H1 (cell line): ENCODE measurements at regions of chr16 and their contacts with region 1.

Region 1: DNA sequence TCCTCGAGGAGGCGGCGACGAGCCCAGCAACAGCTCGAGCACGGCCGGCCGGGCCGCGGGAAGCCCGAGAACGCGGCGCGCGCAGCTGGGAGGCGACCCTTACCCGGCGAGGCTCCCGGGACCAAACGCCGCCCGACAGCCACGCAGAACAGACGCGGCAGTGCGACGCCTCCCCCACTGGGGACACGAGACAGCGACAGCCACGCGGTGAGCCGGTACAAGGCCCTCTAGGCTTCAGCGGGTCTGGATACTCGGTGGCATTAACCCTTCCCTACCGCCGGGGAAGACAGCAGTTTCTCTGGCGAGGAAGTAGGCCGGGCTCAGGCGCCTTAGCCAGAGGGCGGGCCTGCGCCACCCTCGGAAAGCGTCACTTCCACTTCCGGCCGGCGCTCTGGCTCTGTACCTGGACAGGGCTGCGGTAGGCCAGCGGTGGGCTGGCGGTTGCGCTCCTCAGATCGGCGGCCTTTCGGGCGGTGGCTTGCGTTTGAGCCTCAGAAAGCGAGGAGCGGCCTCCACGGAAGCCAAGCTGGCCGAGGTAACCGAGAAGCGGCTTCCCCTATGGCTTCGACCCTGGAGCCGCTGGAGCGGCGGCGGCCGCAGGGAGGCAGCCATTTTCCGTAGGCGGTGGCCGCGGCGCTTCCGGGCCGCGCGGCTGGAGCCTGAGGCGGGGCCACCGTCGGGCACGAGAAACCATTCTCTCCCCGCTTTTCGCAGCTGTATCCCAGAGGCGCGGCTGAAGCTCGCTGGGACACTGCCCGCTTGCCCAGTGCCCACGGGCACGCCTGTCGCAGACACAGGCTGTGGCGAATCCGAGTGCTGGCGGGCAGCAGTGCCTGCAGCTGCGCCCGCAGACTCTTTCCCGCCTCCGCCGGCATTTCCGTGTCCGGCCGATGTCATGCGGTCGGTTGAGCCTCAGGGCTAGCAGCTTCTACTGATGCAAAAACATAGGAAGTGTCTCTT is at the starts of genes TIGD7 and ZNF75A:
- DNase-seq: peak; percentile 66 to 89
- H3K4me3 ChIP-seq: peak within 1 kb of the TSS; percentile 64 to 83 (median 72)
- H3K27ac ChIP-seq: peak within 1 kb of the TSS; percentile 83
- H3K4me1 ChIP-seq: peaks cover 2 to 5% (median 3%) of the 10 kb centered on the region in 4 experiments; a peak in 5 of 7 replicates
- H3K27me3 ChIP-seq: no peaks in the 10 kb centered on the region; a peak in 2 of 7 replicates
- CTCF ChIP-seq: no peak
- EP300 ChIP-seq: 0 out of 3 replicates have a peak, but pooled peaks of 1 of the 2 experiments have one; percentile 3
- POLR2A ChIP-seq: peak; percentile 95 to 97
- RAD21 ChIP-seq: no peak
- total RNA-seq, gene TIGD7: 7.0 and 8.9 TPM in 2 replicates
- total RNA-seq, gene ZNF75A: 27.3 and 30.0 TPM in 2 replicates

Region 2: DNA sequence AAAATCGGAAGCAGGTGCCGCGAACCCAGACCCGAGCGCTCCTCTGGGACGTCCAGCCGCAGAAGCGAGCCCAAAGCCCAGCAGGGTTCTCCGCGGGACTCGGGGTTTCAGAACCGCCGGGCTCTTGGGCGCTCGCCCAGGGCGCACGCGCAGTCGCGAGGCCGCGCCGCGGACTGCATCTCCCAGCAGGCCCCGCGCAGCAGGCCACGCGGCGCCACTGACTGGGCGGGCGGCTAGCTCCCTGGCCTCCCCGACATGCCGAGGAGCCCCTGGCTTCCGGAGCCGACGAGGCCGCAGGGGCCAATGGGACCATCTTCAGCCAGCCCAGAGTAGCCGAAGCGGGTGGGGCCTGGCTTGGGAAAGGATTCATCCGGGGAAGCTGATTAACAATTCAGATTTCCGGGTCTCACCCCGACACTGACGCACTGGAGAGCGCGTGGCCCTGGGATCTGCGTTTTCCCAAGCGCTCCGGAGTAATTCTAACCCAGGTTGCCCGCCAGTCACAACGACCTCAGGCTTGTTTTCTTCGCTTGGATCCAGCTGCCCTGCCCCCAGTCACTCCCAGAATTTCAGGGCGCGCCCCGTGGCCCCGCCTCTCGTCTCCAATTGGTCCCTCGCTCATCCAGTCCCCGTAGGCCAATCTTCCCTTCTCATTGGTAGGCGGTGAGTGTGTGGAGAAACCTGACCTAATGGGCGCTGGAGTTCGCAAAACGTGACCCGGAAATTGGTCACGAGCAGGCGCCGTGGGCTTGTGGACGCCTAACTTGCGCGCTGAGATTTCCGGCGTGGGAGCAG is 22.5 kb before region 1 on chr16 and contains the start of gene ZNF263:
- CTCF ChIA-PET with region 1: interaction called, 3 read pairs
- POLR2A ChIA-PET with region 1: interaction called, 64 read pairs
- DNase-seq: peak; percentile 80 to 90
- H3K4me3 ChIP-seq: peak within 1 kb of the TSS; percentile 81 to 99 (median 97)
- H3K27ac ChIP-seq: peak within 1 kb of the TSS; percentile 97
- H3K4me1 ChIP-seq: peaks cover 0 to 8% (median 1%) of the 10 kb centered on the region in 4 experiments; a peak in 4 of 7 replicates
- H3K27me3 ChIP-seq: no peaks in the 10 kb centered on the region
- CTCF ChIP-seq: no peak
- EP300 ChIP-seq: no peak
- POLR2A ChIP-seq: peak; percentile 26 to 97
- RAD21 ChIP-seq: no peak
- total RNA-seq, gene ZNF263: 26.7 and 27.8 TPM in 2 replicates

Region 3: DNA sequence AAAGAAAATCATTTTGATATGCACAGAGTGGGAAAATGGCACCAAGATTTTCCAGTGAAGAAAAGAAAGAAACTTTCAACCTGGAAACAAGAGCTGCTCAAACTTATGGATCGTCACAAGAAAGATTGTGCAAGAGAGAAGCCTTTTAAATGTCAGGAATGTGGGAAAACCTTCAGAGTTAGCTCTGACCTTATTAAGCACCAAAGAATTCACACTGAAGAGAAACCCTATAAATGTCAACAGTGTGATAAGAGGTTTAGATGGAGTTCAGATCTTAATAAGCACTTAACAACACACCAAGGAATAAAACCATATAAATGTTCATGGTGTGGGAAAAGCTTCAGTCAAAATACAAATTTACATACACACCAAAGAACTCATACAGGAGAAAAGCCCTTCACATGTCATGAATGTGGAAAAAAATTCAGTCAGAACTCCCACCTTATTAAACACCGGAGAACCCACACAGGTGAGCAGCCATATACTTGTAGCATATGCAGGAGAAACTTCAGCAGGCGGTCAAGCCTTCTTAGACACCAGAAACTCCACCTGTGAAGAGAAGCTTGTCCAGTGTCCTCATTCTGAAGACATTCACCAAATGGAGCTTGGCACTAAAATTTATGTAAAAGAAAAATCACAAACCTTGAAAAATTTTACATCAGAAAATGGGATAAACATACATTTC is 12.1 kb after region 1 on chr16:
- CTCF ChIA-PET with region 1: no interaction called
- POLR2A ChIA-PET with region 1: interaction called, 10 read pairs
- DNase-seq: no peak
- H3K4me3 ChIP-seq: peak overlapping the region in 1 of 4 experiments; percentile 23; a peak in 2 of 8 replicates
- H3K27ac ChIP-seq: no peak overlapping the region
- H3K4me1 ChIP-seq: no peaks in the 10 kb centered on the region
- H3K27me3 ChIP-seq: no peaks in the 10 kb centered on the region; a peak in 1 of 7 replicates
- CTCF ChIP-seq: no peak
- EP300 ChIP-seq: no peak
- POLR2A ChIP-seq: no peak
- RAD21 ChIP-seq: no peak